Activated CD8-positive, alpha-beta T cell treated with anti-CD3 and anti-CD28 coated beads, Interleukin-2, amount 10 ng/mL, durations not matched to agents 7 days and 5 days (primary cell): ENCODE measurements at regions of chr1 and their contacts with region 1.

Region 1: GRCh38 chr1:62450301-62450700 is 13.5 kb downstream of the USP1 start:
- DNase-seq: no peak
- ATAC-seq: peak; percentile 30
- H3K4me3 Mint-ChIP-seq: peak overlapping the region; percentile 44
- H3K27ac Mint-ChIP-seq: peak overlapping the region; percentile 22
- H3K4me1 Mint-ChIP-seq: peaks cover 33% of the 10 kb centered on the region
- H3K27me3 Mint-ChIP-seq: no peaks in the 10 kb centered on the region

Region 2: GRCh38 chr1:62436466-62437256 is 13.6 kb before region 1 on chr1 and contains the start of gene USP1:
- CTCF ChIA-PET with region 1: interaction called, 6 read pairs
- POLR2A ChIA-PET with region 1: interaction called, 11 read pairs
- DNase-seq: peak; percentile 99
- ATAC-seq: peak; percentile 90
- H3K4me3 Mint-ChIP-seq: peak within 1 kb of the TSS; percentile 95
- H3K27ac Mint-ChIP-seq: peak within 1 kb of the TSS; percentile 98
- H3K4me1 Mint-ChIP-seq: peaks cover 29% of the 10 kb centered on the region
- H3K27me3 Mint-ChIP-seq: no peaks in the 10 kb centered on the region
- total RNA-seq, gene USP1: 83.7 to 87.0 TPM